Activated T-helper 1 cell treated with anti-CD3 and anti-CD28 coated beads, Interleukin-12 subunit alpha, Interleukin-12 subunit beta, Interleukin-2, Interleukin-4 antibody, amounts not matched to agents 30 ng/mL and 10 ng/mL and 1 ng/mL, durations not matched to agents 14 hours and 24 hours and 36 hours (primary cell): ENCODE measurements at regions of chr14 and their contacts with region 1.

Region 1: GRCh38 chr14:98210045-98210672 is 1061.8 kb downstream of the BCL11B start:
- DNase-seq: peak; percentile 35
- H3K4me3 Mint-ChIP-seq: peak overlapping the region; percentile 45
- H3K27ac Mint-ChIP-seq: peak overlapping the region; percentile 82
- H3K4me1 Mint-ChIP-seq: peaks cover 68% of the 10 kb centered on the region
- H3K27me3 Mint-ChIP-seq: peaks cover 3% of the 10 kb centered on the region

Region 2: DNA sequence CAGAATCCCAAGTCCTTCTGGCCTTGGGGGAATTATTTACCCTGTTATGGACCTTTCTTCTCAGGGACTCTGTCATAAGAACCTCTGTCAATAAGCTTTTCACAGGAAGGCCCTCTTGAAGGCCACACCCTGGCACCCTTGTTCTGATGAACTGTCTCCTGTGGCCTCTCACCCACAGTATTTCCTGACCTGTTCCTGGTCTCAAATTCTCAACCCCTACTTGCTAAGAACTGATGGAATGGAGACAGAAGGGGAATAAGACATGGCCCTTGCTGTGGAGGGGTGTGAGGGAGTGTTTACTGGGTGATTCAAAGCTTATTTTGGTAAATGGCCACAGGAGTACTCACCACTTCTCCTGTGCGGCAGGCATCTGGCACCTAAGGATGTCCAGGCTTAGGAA is 21.1 kb before region 1 on chr14:
- intact Hi-C with region 1: loop called (anchors 1 kb)
- DNase-seq: peak; percentile 38
- H3K4me3 Mint-ChIP-seq: peak overlapping the region; percentile 75
- H3K27ac Mint-ChIP-seq: peak overlapping the region; percentile 97
- H3K4me1 Mint-ChIP-seq: peaks cover 100% of the 10 kb centered on the region
- H3K27me3 Mint-ChIP-seq: no peaks in the 10 kb centered on the region

Region 3: DNA sequence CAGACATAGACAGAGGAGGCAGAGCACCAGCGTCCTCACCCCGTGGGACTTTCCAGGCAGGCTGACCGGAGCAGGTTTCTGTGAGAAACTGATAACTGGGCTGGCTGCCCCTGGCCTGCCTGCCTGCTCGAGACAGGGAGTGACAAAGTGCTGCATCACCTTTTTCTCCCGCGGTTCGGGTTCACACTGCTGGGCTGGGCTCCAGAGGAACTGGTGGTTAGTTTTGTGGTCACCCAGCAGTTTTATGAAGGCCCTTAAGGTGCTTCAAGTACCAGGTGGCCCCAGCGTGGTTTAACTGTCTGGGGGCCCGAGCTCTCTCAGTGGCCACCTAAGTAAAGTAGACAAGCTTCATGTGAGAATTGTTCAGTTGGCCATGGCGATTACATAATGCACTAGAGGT is 11.8 kb before region 1 on chr14:
- intact Hi-C with region 1: loop called (anchors 2 kb)
- DNase-seq: peak; percentile 51
- H3K4me3 Mint-ChIP-seq: peak overlapping the region; percentile 27
- H3K27ac Mint-ChIP-seq: peak overlapping the region; percentile 52
- H3K4me1 Mint-ChIP-seq: peaks cover 95% of the 10 kb centered on the region
- H3K27me3 Mint-ChIP-seq: no peaks in the 10 kb centered on the region

Region 4: GRCh38 chr14:98350213-98350612 is 140.1 kb after region 1 on chr14:
- intact Hi-C with region 1: no loop called
- DNase-seq: no peak
- H3K4me3 Mint-ChIP-seq: no peak overlapping the region
- H3K27ac Mint-ChIP-seq: no peak overlapping the region
- H3K4me1 Mint-ChIP-seq: no peaks in the 10 kb centered on the region
- H3K27me3 Mint-ChIP-seq: no peaks in the 10 kb centered on the region

Region 5: GRCh38 chr14:98608071-98609060 is 398.2 kb after region 1 on chr14:
- intact Hi-C with region 1: no loop called
- DNase-seq: no peak
- H3K4me3 Mint-ChIP-seq: no peak overlapping the region
- H3K27ac Mint-ChIP-seq: no peak overlapping the region
- H3K4me1 Mint-ChIP-seq: peaks cover 13% of the 10 kb centered on the region
- H3K27me3 Mint-ChIP-seq: no peaks in the 10 kb centered on the region